MCF 10A (cell line): ENCODE measurements at regions of chr6 and their contacts with region 1.

Region 1: GRCh38 chr6:127737009-127737486 is 160.1 kb downstream of the C6orf58 start:
- DNase-seq: peak; percentile 77
- H3K4me3 Mint-ChIP-seq: no peak overlapping the region
- H3K27ac Mint-ChIP-seq: no peak overlapping the region
- H3K4me1 Mint-ChIP-seq: no peaks in the 10 kb centered on the region
- H3K27me3 Mint-ChIP-seq: peaks cover 14% of the 10 kb centered on the region
- CTCF ChIP-seq: peak; percentile 70

Region 2: DNA sequence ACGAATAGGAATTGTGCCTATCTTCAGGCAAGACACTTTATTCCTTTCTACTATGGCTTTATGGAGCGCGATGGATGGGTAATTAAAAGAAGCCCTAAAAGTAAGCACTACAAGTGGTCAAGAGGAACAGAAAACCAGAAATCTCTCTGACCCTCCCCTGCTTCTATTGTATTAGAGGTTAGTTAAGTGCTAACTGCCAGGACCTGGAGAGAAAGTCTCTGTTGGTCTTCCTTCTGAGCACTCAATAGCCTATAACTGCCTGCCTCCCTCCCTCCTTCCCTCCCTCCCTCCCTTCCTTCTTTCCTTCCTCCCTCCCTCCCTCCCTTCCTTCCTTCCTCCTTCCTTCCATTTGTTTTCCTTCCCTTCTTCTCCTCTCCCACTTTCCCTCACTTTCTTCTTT is 26.4 kb before region 1 on chr6:
- CTCF ChIA-PET with region 1: no interaction called
- POLR2A ChIA-PET with region 1: no interaction called
- intact Hi-C with region 1: no loop called
- DNase-seq: no peak
- H3K4me3 Mint-ChIP-seq: no peak overlapping the region
- H3K27ac Mint-ChIP-seq: no peak overlapping the region
- H3K4me1 Mint-ChIP-seq: no peaks in the 10 kb centered on the region
- H3K27me3 Mint-ChIP-seq: peaks cover 79% of the 10 kb centered on the region
- CTCF ChIP-seq: no peak

Region 3: DNA sequence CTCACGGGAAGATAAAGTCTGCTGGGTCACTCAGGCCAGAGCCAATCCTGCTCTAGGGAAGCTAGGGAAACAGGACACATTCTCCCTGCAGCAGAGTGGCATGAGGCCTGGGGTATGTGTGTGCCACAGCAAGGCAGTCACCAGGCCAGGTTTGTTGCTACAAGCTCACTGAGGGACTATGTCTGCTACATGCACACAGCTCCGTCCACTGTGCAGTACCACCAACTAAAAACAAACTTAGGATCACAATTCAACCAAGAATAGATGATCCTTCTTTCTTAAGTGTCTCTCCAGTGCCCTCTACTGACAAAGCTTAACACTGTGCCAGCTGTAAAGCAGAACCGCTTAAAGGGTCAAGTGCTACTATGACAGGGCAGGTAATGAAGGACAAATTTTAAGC is 590.8 kb after region 1 on chr6:
- CTCF ChIA-PET with region 1: no interaction called
- POLR2A ChIA-PET with region 1: no interaction called
- intact Hi-C with region 1: loop called (anchors 1 kb)
- DNase-seq: peak; percentile 38
- H3K4me3 Mint-ChIP-seq: no peak overlapping the region
- H3K27ac Mint-ChIP-seq: no peak overlapping the region
- H3K4me1 Mint-ChIP-seq: no peaks in the 10 kb centered on the region
- H3K27me3 Mint-ChIP-seq: no peaks in the 10 kb centered on the region
- CTCF ChIP-seq: peak; percentile 24

Region 4: DNA sequence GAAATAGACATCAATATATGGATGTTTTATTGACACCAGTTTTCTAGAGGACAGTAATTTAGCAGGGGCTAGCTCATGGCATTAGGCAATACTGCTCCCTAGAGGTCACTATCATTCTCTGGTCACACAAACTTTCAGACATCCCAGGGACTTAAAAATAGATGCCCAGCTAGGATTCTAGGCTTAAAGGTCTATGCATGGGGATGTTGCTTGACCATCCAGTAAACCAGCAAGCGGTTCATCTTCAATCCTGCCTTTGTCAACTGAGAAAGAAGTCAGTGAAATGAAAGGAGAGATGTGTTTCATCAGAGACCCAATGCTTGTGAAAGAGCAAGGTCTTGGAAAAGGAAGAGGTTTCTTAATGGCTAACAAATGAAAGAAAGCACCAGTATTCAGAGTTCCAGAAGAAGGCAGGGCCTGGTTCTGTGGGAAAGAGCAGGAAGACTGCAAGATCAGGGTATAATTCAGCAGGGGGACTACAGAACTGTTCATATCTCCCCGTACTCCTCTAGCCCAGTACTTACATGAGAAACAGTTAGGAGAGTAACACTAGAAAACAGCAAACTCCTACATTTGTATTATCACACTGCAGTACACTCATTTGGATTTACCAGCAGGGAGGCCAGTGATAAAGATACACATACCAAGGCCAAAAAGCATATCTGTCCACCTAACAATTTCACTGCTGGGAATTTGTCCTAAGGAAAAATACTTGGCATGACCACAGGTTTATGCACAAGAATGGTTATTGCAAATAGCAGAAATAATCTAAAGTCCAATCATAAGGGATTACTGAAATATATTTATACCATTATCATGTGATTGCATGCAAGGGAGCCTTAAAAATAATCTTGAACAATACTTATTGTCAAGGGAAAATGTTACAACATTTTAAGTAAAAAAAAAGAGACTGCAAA is 994.5 kb after region 1 on chr6:
- CTCF ChIA-PET with region 1: interaction called, 11 read pairs
- POLR2A ChIA-PET with region 1: interaction called, 7 read pairs
- intact Hi-C with region 1: loop called (anchors 1 kb)
- DNase-seq: peak; percentile 64
- H3K4me3 Mint-ChIP-seq: no peak overlapping the region
- H3K27ac Mint-ChIP-seq: no peak overlapping the region
- H3K4me1 Mint-ChIP-seq: no peaks in the 10 kb centered on the region
- H3K27me3 Mint-ChIP-seq: no peaks in the 10 kb centered on the region
- CTCF ChIP-seq: peak; percentile 72